ENCODE measurements at regions of chr1 and their contacts with region 1.

Region 1: GRCh38 chr1:86356247-86356646 is 39.9 kb downstream of the ODF2L start:
- H3K4me3 Mint-ChIP-seq: no peak overlapping the region
- H3K27ac Mint-ChIP-seq: no peak overlapping the region
- H3K4me1 Mint-ChIP-seq: no peaks in the 10 kb centered on the region
- H3K27me3 Mint-ChIP-seq: no peaks in the 10 kb centered on the region

Region 2: GRCh38 chr1:85894651-85895050 is 461.6 kb before region 1 on chr1:
- intact Hi-C with region 1: loop called (anchors 1 kb)
- H3K4me3 Mint-ChIP-seq: no peak overlapping the region
- H3K27ac Mint-ChIP-seq: no peak overlapping the region
- H3K4me1 Mint-ChIP-seq: no peaks in the 10 kb centered on the region
- H3K27me3 Mint-ChIP-seq: no peaks in the 10 kb centered on the region

Region 3: DNA sequence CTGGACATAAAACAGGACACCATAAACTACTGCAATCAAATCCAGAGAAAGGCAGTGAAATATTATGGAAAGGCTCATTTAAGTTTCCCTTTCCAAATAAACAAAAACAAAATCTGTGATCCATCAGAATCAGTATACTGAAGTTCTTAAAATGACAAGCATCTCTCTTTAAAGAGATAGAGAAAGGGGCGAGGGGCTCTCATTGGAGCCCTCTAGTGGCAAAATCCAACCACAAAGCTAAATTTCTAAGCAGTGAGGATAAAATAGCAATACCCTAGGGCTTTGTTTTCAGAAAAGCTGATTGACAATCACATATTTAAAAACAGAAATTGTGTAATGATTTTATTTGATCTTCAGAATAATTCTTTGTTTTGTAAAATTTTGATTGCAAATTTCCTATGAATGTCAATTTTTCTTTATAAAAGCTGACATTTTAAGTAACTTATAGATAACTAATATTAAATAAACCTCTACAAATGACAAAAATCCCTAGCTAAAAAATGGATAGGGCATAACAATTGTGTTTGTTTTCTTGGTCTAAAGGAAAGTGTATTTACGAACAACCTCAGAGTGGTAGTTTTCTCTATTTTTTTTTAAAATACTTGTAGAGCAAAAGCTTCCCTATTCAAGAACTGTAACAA is 337.8 kb before region 1 on chr1:
- intact Hi-C with region 1: loop called (anchors 5 kb)
- H3K4me3 Mint-ChIP-seq: no peak overlapping the region
- H3K27ac Mint-ChIP-seq: no peak overlapping the region
- H3K4me1 Mint-ChIP-seq: no peaks in the 10 kb centered on the region
- H3K27me3 Mint-ChIP-seq: no peaks in the 10 kb centered on the region

Region 4: GRCh38 chr1:86156566-86157455 is 199.4 kb before region 1 on chr1 and contains the start of gene COL24A1:
- intact Hi-C with region 1: loop called (anchors 5 kb)
- H3K4me3 Mint-ChIP-seq: peak within 1 kb of the TSS; percentile 71
- H3K27ac Mint-ChIP-seq: peak within 1 kb of the TSS; percentile 63
- H3K4me1 Mint-ChIP-seq: peaks cover 46% of the 10 kb centered on the region
- H3K27me3 Mint-ChIP-seq: peaks cover 30% of the 10 kb centered on the region

Measured in dendritic cell treated with granulocyte-macrophage colony-stimulating factor and Interleukin-4, amounts not matched to agents 40 ng/mL and 50 ng/mL, for 4 days (primary cell).